ENCODE measurements at regions of chr2 and their contacts with region 1.

Region 1: DNA sequence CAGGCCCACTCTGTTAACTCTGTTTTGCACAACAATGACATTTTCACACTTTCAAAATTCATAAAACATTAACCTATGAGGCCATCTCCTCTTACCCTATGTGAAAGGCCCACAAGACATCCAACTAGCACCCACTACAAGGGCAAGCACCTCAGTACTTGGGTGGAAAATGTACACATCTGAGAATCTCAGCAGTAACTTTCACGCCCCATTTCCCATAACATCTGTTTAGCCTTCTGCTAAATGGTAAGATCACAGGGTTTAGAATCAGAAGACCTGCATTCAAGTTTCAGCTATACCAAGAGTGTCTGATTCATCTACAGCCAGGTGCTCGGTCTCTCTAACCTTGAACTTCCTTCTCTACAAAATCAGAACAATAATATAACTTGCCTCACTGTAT is 89.2 kb downstream of the SP100 start:
- DNase-seq: no peak
- ATAC-seq: no peak
- H3K4me3 ChIP-seq: no peak overlapping the region
- H3K4me1 ChIP-seq: no peaks in the 10 kb centered on the region
- CTCF ChIP-seq: no peak

Region 2: DNA sequence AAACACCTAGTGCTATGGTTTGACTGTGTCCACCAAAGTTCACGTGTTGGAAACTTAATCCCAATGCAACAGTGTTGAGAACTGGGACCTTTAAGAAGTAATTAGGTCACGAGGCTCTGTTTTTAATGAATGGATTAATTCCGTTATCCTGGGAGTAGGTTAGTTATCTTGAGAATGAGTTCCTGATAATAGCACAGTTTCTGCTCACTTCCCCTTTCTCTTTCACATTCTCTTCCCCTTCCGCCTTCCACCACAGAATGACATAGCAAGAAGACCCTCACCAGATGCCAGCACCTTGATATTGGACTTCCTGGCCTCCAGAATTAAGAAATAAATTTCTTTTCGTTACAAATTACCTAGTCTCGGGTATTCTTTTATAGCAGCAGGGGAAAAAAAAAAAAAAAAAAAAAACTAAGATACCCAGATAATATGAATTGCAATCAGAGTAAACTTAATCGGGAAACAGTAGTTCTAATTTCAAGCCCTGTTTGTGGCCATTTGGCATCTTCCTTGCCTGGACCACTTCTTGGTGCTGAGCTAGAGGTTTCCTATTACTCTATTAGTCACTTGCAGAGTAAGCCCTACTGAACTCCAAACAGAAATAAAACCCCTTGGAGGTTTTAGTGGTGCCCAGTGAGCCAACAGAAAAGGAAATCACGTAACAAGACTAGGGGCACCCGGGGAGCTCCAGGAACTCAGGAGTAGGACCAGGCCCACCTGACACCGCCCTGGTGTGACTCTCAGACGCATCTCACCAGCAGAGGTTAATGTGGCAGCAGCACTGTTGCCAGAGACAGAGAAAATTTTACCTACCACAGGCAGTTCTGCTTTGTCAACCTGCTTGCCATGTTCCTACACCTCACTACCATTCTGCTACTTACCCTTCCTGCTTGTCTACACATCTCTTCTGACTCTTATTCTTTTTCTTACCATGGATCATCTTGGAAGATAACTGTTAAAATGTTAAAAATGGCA is 59.9 kb after region 1 on chr2:
- intact Hi-C with region 1: loop called in 1 of 2 experiments (anchors 10 kb)
- DNase-seq: no peak
- ATAC-seq: no peak
- H3K4me3 ChIP-seq: no peak overlapping the region
- H3K4me1 ChIP-seq: no peaks in the 10 kb centered on the region
- CTCF ChIP-seq: no peak

Region 3: DNA sequence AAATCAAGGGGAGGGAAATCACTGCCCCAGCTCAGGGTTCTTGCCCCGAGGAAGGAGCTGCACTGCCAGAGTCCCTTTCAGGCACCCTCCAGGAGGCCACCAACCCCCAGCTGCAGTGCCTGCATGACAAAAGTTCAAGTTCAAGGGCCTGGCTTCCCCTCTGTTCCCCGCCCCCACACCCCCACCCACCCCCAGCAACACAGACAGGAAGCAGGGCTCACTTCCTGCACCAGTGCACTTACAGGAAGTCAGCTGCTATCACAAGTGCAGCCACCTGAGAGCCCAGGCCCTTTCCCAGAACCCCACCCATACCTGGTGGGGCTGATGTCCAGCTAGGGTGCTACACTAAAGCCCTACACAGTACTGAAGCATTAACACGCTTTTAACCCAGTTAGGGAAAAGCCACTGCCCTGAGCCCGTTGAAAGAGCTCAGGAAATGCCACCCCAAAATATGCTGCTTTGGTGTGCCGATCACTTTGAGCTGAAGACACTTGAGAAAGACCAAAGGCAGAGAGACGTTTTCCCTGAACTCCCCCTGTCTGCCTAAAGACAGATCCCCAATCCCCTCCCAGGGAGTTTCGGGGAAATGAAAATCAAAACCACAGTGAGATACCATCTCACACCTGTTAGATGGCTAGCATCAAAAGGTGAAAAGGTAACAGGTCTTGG is 97.5 kb after region 1 on chr2:
- intact Hi-C with region 1: no loop called
- DNase-seq: peak in 2 of 3 donors; percentile 28 to 73
- ATAC-seq: peak; percentile 94
- H3K4me3 ChIP-seq: no peak overlapping the region
- H3K4me1 ChIP-seq: no peaks in the 10 kb centered on the region
- CTCF ChIP-seq: no peak

Region 4: DNA sequence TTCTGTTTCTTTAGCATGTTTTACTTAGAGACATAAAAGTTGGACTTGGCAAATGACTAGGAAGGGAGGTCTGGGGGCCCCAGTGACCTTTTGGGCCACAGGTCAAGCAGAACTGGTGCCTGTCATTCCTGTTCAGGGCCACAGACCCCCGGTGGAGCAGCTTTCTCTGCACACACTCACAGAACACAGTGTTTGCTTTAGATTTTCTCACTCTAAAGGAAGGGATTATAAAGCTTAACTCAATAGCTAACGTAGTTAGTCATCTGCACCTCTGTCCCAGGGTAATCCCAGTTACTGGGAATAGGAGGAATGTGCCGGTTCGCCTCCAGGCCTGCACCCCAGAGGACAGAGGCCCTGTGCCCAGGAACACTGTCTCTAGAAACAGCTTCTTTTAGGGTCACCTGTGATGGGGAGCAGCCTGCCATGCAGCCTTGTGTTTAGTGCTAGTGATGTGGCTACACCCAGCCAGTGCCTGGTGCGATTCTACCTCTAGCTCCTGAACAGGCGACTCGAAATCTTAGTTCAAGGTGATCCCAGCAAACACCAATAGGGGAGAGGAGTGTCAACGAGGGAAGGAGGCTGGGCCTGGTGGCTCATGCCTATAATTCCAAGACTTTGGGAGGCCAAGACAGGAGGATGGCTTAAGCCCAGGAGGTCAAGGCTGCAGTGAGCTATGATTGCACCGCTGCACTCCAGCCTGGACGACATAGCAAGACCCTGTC is 502.3 kb after region 1 on chr2:
- intact Hi-C with region 1: no loop called
- DNase-seq: no peak
- ATAC-seq: no peak
- H3K4me3 ChIP-seq: no peak overlapping the region
- H3K4me1 ChIP-seq: no peaks in the 10 kb centered on the region
- CTCF ChIP-seq: no peak